ENCODE measurements at regions of chr10 and their contacts with region 1.

Region 1: DNA sequence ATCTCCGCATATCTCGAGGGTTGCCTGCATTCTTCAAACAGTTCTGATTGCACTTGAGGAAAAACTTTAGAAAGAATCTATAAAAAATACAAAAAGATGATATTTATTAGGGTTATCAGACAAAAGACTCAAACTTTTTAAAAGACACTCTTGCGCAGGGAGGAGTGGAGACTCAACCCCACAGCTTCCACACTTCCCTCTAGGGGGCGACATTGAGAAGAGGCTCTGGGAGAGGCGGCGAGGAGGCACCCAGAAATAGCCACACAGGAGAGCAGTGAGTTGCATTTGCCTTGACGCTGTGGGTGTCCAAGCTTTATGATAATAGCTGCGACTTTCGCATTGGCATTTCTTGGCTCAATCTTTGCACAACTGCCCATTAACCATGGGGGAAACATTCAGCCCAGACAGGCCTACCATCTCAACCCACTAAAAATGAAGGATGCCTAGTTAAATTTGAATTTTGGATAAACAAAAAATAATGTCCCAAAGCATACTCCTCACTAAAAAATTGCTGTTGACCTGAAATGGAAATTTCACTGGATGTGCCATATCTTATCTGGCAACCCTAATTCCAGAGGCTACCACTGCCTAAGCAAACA is 86.2 kb downstream of the EBF3 start:
- DNase-seq: no peak
- H3K4me3 Mint-ChIP-seq: no peak overlapping the region
- H3K27ac Mint-ChIP-seq: no peak overlapping the region
- H3K4me1 Mint-ChIP-seq: no peaks in the 10 kb centered on the region
- H3K27me3 Mint-ChIP-seq: no peaks in the 10 kb centered on the region

Region 2: GRCh38 chr10:129825826-129826225 is 52.0 kb before region 1 on chr10:
- intact Hi-C with region 1: no loop called
- DNase-seq: no peak
- H3K4me3 Mint-ChIP-seq: no peak overlapping the region
- H3K27ac Mint-ChIP-seq: no peak overlapping the region
- H3K4me1 Mint-ChIP-seq: no peaks in the 10 kb centered on the region
- H3K27me3 Mint-ChIP-seq: no peaks in the 10 kb centered on the region

Region 3: GRCh38 chr10:130127364-130128061 is 249.6 kb after region 1 on chr10:
- intact Hi-C with region 1: loop called (anchors 5 kb)
- DNase-seq: peak; percentile 40
- H3K4me3 Mint-ChIP-seq: no peak overlapping the region
- H3K27ac Mint-ChIP-seq: no peak overlapping the region
- H3K4me1 Mint-ChIP-seq: peaks cover 7% of the 10 kb centered on the region
- H3K27me3 Mint-ChIP-seq: peaks cover 38% of the 10 kb centered on the region

Measured in activated T-helper 2 cell treated with anti-CD3 and anti-CD28 coated beads, Interferon-gamma antibody, Interleukin-2, Interleukin-4, amounts not matched to agents 10 μg/mL and 5 μg/mL and 100 μg/mL, durations not matched to agents 14 hours and 24 hours and 36 hours (primary cell).